ENCODE measurements at regions of chr6 and their contacts with region 1.

Region 1: GRCh38 chr6:56796196-56796532 is 153.5 kb upstream of the DST start:
- DNase-seq: no peak
- CTCF ChIP-seq: no peak

Region 2: DNA sequence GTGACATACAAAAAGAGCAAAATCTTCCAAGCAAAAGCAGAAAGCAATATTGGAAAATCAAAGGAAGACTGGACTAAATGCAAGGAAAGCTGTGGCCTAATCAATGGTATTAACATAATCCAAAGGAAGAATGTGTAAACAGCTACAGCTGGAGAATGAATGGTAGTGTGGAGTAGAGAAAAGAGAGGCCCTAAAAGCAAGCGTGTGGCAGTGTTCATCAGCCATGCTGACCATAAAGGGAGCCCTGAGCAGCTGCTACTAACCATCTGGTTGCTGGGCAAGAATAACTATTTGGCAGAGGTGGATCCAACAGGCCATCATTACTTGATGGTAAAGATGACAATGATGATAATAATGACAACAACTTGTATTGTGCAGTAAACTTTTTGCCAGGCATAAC is 10.2 kb after region 1 on chr6:
- CTCF ChIA-PET with region 1: interaction called, 12 read pairs
- POLR2A ChIA-PET with region 1: no interaction called
- DNase-seq: no peak
- CTCF ChIP-seq: no peak

Region 3: DNA sequence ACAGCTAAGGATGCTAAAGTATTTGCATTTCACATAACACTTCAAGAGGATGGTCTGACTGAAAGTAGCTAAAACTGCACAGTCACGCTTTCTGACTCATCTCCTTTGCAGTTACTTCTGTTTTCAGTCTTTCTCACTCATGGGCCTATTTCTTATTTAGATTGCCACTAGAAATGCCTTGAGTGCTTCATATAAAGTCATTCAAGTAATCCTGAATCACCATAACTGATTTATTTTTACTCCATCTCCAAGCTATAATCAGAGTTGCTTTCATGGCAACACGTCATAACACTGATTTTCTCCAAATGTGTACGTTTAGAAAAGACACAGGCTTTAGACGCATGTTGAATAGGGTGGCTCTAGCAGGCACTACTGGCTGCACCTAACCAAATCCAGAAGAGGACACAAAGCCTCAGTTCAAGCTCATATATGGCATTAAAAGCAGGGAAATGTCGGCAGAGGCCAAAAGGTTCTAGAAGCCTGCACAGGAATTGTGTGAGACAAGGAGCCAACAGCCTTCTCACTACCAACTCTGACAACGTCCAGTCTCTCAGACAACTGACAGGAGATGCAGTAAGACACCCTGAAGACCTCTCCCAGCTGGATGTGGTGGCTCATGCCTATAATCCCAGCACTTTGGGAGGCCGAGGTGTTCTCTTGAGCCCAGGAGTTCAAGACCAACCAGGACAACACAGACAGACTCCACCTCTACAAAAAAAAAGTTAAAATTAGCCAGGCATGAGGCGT is 94.7 kb after region 1 on chr6:
- CTCF ChIA-PET with region 1: no interaction called
- POLR2A ChIA-PET with region 1: no interaction called
- DNase-seq: peak; percentile 76
- CTCF ChIP-seq: no peak

Measured in GM10248 (cell line).